ENCODE measurements at regions of chr6 and their contacts with region 1.

Region 1: DNA sequence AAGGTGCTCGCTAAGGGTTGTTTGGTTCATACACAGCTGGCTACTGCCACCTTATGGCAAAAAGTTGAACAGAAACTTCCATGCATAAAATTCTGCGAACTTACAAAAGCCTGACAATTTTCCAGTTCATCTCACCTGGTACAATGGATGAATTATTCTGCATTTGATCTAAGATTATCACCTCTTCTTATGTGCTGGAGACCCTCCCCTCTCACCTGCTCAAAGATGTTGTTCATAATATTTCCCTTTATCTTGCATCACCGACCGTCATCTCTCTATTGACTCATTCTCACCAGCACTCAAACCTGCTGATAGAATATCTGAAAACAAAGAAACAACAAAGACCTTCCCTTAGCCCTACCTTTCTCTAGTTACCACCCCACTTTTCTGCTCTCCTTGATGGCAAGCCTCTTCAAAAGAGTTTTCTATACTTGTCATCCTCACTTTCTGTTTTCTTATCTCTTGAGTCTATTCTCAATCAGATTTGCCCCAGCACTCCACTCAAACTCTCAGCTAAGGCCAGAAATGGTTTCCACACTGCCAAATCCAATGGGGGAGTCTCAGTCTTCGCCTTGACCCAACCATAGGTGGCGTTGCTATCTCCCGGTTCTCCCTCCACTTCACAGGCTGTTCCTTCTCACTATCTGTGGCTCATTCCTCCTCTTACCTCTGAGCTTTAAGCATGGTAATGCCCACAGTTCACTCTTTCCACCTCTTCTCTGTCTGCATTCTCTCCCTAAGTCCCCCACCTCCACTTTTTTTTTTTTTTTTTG is 25.8 kb downstream of the SNRNP48 start:
- DNase-seq: peak; percentile 87
- ATAC-seq: peak; percentile 58
- H3K4me3 ChIP-seq: no peak overlapping the region
- H3K27ac ChIP-seq: no peak overlapping the region
- H3K4me1 ChIP-seq: peaks cover 11% of the 10 kb centered on the region
- H3K27me3 ChIP-seq: no peaks in the 10 kb centered on the region
- CTCF ChIP-seq: peak; percentile 79

Region 2: GRCh38 chr6:6676910-6677441 is 938.8 kb before region 1 on chr6:
- CTCF ChIA-PET with region 1: no interaction called
- POLR2A ChIA-PET with region 1: no interaction called
- intact Hi-C with region 1: loop called (anchors 2 kb)
- DNase-seq: peak; percentile 93
- ATAC-seq: peak; percentile 74
- H3K4me3 ChIP-seq: no peak overlapping the region
- H3K27ac ChIP-seq: peak overlapping the region; percentile 36
- H3K4me1 ChIP-seq: peaks cover 17% of the 10 kb centered on the region
- H3K27me3 ChIP-seq: peaks cover 4% of the 10 kb centered on the region; the same call in 1 of the 2 replicates
- CTCF ChIP-seq: peak; percentile 96

Region 3: GRCh38 chr6:7276199-7276524 is 339.6 kb before region 1 on chr6:
- CTCF ChIA-PET with region 1: no interaction called
- POLR2A ChIA-PET with region 1: no interaction called
- intact Hi-C with region 1: loop called (anchors 1 kb)
- DNase-seq: no peak
- ATAC-seq: no peak
- H3K4me3 ChIP-seq: no peak overlapping the region
- H3K27ac ChIP-seq: no peak overlapping the region
- H3K4me1 ChIP-seq: no peaks in the 10 kb centered on the region
- H3K27me3 ChIP-seq: no peaks in the 10 kb centered on the region
- CTCF ChIP-seq: no peak

Region 4: GRCh38 chr6:7424967-7425807 is 190.6 kb before region 1 on chr6:
- CTCF ChIA-PET with region 1: no interaction called
- POLR2A ChIA-PET with region 1: no interaction called
- intact Hi-C with region 1: loop called (anchors 1 kb)
- DNase-seq: peak; percentile 77
- ATAC-seq: peak; percentile 95
- H3K4me3 ChIP-seq: no peak overlapping the region
- H3K27ac ChIP-seq: no peak overlapping the region
- H3K4me1 ChIP-seq: no peaks in the 10 kb centered on the region
- H3K27me3 ChIP-seq: no peaks in the 10 kb centered on the region
- CTCF ChIP-seq: peak; percentile 72

Region 5: DNA sequence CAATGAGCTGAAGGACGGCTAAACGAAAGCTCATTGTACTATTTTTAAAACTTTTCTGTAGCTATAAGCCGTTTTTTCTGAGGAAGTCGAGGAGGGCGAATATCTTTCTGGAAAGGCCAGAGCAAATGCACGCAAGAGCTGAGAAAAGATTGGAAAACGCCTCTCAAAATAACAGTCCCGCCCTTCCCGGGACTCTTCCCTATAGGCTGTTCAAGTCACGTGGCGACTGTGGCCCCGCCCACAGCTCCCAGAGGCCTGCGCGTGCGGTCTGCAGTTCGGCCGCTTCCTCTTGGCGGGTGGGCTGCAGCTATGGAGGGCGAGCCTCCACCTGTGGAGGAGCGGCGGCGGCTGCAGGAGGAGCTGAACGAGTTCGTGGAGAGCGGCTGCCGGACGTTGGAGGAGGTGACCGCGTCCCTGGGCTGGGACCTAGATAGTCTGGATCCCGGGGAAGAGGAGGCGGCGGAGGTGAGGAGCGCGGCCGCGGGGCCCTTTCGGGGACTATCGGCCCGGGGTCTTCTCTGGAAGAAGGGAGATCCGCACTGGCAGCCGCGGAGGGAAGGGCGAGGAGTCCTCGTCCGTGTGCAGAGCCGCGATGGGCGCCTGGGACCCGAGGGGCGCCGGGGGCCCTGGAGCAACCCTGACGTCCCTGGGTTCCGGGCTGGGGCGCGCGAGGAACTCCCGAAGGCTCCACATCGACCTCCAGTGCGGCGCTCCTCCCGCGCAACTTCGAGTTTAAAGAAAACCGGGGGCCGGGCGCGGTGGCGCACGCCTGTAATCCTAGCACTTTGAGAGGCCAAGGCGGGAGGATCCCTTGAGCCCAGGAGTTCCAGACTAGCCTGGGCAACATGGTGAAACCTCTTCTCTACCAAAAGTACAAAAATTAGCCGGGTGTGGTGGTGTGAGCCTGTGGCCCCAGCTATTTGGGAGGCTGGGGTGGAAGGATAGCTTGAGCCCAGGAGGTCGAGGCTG is 25.6 kb before region 1 on chr6 and contains the start of gene SNRNP48:
- CTCF ChIA-PET with region 1: interaction called, 3 read pairs
- POLR2A ChIA-PET with region 1: no interaction called
- intact Hi-C with region 1: loop called (anchors 1 kb)
- DNase-seq: peak; percentile 95
- ATAC-seq: peak; percentile 97
- H3K4me3 ChIP-seq: peak within 1 kb of the TSS; percentile 94
- H3K27ac ChIP-seq: no peak within 1 kb of the TSS
- H3K4me1 ChIP-seq: peaks cover 18% of the 10 kb centered on the region
- H3K27me3 ChIP-seq: no peaks in the 10 kb centered on the region
- CTCF ChIP-seq: no peak
- total RNA-seq, gene SNRNP48: 7.0 and 7.7 TPM in 2 replicates

Region 6: GRCh38 chr6:8006208-8006607 is 390.4 kb after region 1 on chr6:
- CTCF ChIA-PET with region 1: no interaction called
- POLR2A ChIA-PET with region 1: no interaction called
- intact Hi-C with region 1: loop called (anchors 10 kb)
- DNase-seq: peak; percentile 55
- ATAC-seq: peak; percentile 54
- H3K4me3 ChIP-seq: no peak overlapping the region
- H3K27ac ChIP-seq: no peak overlapping the region
- H3K4me1 ChIP-seq: no peaks in the 10 kb centered on the region
- H3K27me3 ChIP-seq: no peaks in the 10 kb centered on the region
- CTCF ChIP-seq: peak; percentile 72